ENCODE measurements at regions of chr3 and their contacts with region 1.

Region 1: DNA sequence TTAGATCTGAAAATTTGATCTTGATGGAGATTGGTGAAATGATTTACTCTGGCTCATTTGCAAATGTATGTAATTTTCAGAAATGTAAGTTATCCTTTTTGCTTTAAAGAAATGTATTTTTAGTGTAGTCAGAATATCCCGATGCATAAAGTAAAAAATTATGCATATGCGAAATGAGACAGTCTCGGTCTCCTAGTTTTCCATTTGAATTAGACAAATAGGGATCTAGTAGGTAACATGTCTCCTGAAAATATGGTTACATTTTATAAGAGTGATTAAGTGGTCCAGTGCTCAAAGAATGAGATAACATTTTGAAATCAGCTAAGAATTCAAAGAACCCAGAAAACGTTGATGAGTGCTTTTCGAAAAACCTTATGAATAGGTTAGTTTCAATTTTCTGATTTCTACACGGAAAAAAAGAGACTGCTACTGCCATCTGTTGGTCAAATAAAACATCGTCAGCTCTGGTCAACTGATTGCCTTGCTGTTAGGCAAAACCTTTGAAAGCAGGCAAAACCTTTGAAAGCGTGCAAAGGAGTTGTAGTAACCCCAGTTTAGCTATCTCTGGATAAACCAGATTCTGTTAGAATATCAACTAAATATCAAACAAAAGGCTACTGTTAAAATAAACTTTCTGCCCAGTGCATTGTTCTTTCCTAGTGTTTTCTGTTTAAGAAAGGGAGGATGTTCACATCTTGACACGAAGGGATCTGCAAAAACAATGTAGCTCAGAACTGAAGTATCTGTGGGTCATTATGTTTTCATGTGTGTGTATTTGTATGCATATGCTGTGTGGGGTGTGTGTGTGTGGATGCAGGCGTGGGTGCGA is 59.3 kb upstream of the CHMP2B start:
- DNase-seq: peak in 1 of 3 donors; percentile 57
- ATAC-seq: peak; percentile 61
- H3K4me3 ChIP-seq: no peak overlapping the region
- H3K4me1 ChIP-seq: no peaks in the 10 kb centered on the region
- CTCF ChIP-seq: peak; percentile 55

Region 2: DNA sequence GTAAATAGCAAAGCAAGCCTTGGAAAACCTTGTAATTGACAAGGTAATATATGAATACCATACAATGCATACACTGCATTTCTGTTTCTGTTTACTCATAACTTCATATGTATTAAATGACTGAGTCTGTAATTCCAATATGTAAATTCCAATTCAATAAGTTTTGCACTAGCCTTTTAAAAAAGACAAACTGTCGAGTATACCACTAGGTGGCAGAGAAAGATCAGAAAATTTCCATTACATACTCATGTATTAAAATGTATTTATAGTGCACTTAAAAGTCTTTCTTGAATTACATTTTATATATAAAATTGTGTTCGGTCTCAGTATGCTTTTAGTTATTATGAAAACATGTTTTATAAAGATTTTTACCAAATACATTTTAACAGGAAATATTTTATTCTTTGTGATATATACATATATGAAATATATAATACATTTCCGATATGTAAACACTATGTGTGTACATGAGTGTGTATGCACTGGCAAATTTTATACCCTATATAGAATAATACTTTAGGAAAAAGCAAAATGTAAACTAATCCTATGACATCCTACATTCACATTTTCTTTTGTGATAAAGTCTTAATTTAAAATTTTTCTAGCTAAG is 393.7 kb before region 1 on chr3:
- intact Hi-C with region 1: loop called in 1 of 2 experiments (anchors 10 kb)
- DNase-seq: no peak
- ATAC-seq: no peak
- H3K4me3 ChIP-seq: no peak overlapping the region
- H3K4me1 ChIP-seq: no peaks in the 10 kb centered on the region
- CTCF ChIP-seq: no peak